RWPE1 (cell line): ENCODE measurements at regions of chr9 and their contacts with region 1.

Region 1: DNA sequence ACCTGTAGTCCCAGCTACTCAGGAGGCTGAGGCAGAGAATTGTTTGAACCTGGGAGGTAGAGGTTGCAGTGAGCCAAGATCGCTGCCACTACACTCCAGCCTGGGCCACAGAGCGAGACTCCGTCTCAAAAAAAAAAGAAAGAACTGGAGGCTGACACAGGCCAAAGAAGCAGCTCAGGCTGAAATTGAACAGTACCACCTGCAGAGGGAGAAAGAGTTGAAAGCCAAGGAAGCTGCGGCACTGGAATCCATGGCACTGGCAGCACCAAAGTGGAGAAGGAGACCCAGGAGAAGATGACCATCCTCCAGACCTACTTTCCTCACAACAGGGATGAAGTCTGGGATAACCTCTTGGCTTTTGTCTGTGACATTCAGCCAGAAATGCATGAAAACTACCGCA is 11.3 kb upstream of the TMEM141 start:
- DNase-seq: no peak
- H3K27ac ChIP-seq: no peak overlapping the region
- CTCF ChIP-seq: no peak

Region 2: DNA sequence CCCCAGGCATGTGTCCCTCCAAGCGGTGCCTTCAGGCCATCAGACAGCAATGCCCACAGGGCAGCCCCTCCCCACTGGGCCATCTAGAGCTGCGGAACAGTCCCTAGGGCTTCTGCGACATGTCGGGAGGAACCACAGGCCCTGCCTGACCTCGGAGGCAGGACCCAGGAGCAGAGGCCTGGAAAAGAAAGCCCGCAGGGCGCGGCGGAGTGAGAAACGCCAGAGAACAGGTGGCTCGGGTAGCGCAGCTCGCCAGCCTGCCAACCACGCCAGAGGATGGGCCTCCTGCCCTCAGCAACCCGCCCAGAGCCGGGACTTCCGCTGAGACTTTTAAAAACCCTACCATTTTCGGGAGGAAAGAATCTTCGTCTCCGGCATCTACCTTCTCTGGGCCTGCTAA is 22.5 kb before region 1 on chr9:
- CTCF ChIA-PET with region 1: interaction called, 11 read pairs
- POLR2A ChIA-PET with region 1: no interaction called
- DNase-seq: no peak
- H3K27ac ChIP-seq: no peak overlapping the region
- CTCF ChIP-seq: no peak

Region 3: GRCh38 chr9:136769710-136770191 is 10.1 kb before region 1 on chr9:
- CTCF ChIA-PET with region 1: interaction called, 11 read pairs
- POLR2A ChIA-PET with region 1: no interaction called
- DNase-seq: peak; percentile 34
- H3K27ac ChIP-seq: no peak overlapping the region
- CTCF ChIP-seq: no peak; the same call in 1 of the 2 replicates